Posterior vena cava (tissue), 2 donors: ENCODE measurements at regions of chr12 and their contacts with region 1.

Region 1: GRCh38 chr12:112879191-112879705 is 27.5 kb upstream of the OAS1 start:
- DNase-seq: no peak

Region 2: GRCh38 chr12:112891093-112892024 is 12.1 kb after region 1 on chr12:
- intact Hi-C with region 1: loop called in 1 of 2 experiments (anchors 1 kb)
- DNase-seq: peak; percentile 83